PC-3 (cell line): ENCODE measurements at regions of chr1 and their contacts with region 1.

Region 1: GRCh38 chr1:29145739-29146437 is 22.2 kb upstream of the TMEM200B start:
- DNase-seq: peak; percentile 59
- ATAC-seq: peak; percentile 22
- H3K4me3 ChIP-seq: no peak overlapping the region
- H3K27ac ChIP-seq: peak overlapping the region; percentile 74
- H3K4me1 ChIP-seq: peaks cover 28% of the 10 kb centered on the region
- H3K27me3 ChIP-seq: no peaks in the 10 kb centered on the region
- CTCF ChIP-seq: no peak

Region 2: DNA sequence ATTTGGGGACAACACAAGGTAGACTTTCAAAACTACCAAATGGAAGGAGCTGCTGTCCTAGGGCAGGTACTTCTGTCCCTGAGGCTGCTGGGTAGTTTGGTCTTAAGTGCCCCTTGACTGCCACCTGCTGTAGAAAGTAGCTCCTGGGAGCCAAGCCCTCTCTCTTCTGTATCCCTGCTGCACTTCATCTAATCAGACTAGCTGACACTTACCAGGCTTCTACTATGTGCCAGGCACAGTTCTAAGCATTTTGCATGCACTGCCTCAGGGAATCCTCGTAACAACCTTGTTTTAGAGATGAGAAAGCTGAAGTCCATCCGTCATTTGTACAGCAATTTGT is 51.7 kb after region 1 on chr1:
- CTCF ChIA-PET with region 1: interaction called, 11 read pairs
- POLR2A ChIA-PET with region 1: no interaction called
- intact Hi-C with region 1: no loop called
- DNase-seq: peak; percentile 60
- ATAC-seq: peak; percentile 92
- H3K4me3 ChIP-seq: no peak overlapping the region
- H3K27ac ChIP-seq: no peak overlapping the region
- H3K4me1 ChIP-seq: peaks cover 12% of the 10 kb centered on the region
- H3K27me3 ChIP-seq: no peaks in the 10 kb centered on the region
- CTCF ChIP-seq: peak; percentile 67